Left colon (tissue), 2 donors: ENCODE measurements at regions of chr4 and their contacts with region 1.

Region 1: GRCh38 chr4:76179398-76180318 is 31.5 kb upstream of the NUP54 start:
- DNase-seq: peak; percentile 80 to 96
- ATAC-seq: peak; percentile 95

Region 2: DNA sequence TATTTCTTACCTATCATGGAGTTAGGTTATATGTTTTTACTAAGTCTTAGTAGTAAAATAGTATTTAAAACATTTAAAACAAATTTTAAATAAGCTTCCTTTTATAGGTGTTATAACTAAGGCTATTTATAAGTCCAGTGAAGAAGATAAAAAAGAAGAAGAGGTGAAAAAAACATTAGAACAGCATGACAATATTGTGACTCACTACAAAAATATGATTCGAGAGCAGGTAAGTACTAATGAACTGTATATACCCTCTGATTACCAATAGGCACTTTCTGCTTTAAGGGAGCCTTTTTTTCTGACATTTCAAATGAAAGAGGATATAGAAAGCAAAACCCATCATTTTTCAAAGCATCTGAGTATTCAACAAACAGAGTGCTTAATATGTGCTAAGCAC is 378.7 kb before region 1 on chr4:
- intact Hi-C with region 1: no loop called
- DNase-seq: no peak
- ATAC-seq: no peak

Region 3: GRCh38 chr4:76251441-76252270 is 72.0 kb after region 1 on chr4 and contains the start of gene FAM47E:
- intact Hi-C with region 1: loop called in 1 of 2 experiments (anchors 5 kb)
- DNase-seq: peak; percentile 85 to 87
- ATAC-seq: peak; percentile 99
- total RNA-seq, gene FAM47E: 6.1 to 6.5 TPM

Region 4: GRCh38 chr4:76341063-76341462 is 161.4 kb after region 1 on chr4:
- intact Hi-C with region 1: no loop called
- DNase-seq: no peak
- ATAC-seq: no peak

Region 5: DNA sequence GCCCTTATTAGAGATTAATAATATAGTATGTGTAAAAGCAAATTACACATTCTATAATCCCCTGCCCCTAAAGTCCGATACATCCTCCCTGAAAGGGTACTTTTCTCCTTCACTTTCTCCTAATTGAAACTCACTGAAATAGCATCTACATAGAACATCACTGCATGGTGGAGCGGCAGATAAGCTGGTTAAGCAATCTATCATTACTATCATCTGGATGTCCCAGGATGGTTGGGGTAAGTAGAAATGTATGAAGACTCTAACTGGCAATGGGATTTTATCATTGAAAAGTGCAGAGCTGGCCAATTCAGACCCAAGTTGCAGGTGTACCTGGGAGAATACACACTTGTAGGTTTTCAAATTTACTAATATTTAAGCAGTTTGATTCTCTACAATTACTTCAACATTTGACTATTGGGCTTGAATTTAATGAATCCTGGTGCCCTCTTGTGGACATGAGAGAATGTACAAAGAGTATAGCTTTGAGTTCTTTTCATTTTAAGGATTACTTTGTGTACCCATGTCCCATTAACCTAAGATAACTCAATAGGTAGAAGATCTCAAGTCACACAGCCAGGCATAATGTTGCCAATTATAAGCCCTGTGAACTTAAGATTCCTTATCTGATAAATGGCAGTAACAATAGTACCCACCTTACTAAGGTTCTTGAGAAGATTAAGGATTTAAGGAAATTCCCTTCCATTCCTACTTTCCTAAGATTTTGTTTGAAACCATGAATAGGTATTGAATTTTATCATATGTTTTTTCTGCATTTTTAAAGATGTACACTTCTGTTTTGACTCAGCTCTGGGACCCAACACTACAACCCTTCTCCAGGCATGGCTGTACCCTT is 325.2 kb after region 1 on chr4:
- intact Hi-C with region 1: loop called in 1 of 2 experiments (anchors 10 kb)
- DNase-seq: no peak
- ATAC-seq: peak; percentile 62

Region 6: GRCh38 chr4:77158487-77158861 is 978.8 kb after region 1 on chr4:
- intact Hi-C with region 1: no loop called
- DNase-seq: no peak
- ATAC-seq: no peak